Psoas muscle (tissue), 8 donors: ENCODE measurements at regions of chr20 and their contacts with region 1.

Region 1: GRCh38 chr20:41395667-41396664 is 29.3 kb upstream of the EMILIN3 start:
- DNase-seq: no peak
- ATAC-seq: peak in 1 of 4 donors; percentile 20
- H3K4me3 ChIP-seq: no peak overlapping the region
- H3K27ac ChIP-seq: no peak overlapping the region
- H3K4me1 ChIP-seq: peaks cover 6% of the 10 kb centered on the region
- H3K27me3 ChIP-seq: no peaks in the 10 kb centered on the region
- CTCF ChIP-seq: no peak

Region 2: GRCh38 chr20:41361757-41362747 is 33.9 kb before region 1 on chr20:
- intact Hi-C with region 1: loop called in 1 of 2 experiments (anchors 5 kb)
- DNase-seq: peak; percentile 55 to 79
- ATAC-seq: peak; percentile 66 to 81 (median 80)
- H3K4me3 ChIP-seq: no peak overlapping the region
- H3K27ac ChIP-seq: peak overlapping the region; percentile 53
- H3K4me1 ChIP-seq: peaks cover 9% of the 10 kb centered on the region
- H3K27me3 ChIP-seq: peaks cover 0 to 19% (median 10%) of the 10 kb centered on the region in 3 donors
- CTCF ChIP-seq: no peak